ENCODE measurements at regions of chr12 and their contacts with region 1.

Region 1: DNA sequence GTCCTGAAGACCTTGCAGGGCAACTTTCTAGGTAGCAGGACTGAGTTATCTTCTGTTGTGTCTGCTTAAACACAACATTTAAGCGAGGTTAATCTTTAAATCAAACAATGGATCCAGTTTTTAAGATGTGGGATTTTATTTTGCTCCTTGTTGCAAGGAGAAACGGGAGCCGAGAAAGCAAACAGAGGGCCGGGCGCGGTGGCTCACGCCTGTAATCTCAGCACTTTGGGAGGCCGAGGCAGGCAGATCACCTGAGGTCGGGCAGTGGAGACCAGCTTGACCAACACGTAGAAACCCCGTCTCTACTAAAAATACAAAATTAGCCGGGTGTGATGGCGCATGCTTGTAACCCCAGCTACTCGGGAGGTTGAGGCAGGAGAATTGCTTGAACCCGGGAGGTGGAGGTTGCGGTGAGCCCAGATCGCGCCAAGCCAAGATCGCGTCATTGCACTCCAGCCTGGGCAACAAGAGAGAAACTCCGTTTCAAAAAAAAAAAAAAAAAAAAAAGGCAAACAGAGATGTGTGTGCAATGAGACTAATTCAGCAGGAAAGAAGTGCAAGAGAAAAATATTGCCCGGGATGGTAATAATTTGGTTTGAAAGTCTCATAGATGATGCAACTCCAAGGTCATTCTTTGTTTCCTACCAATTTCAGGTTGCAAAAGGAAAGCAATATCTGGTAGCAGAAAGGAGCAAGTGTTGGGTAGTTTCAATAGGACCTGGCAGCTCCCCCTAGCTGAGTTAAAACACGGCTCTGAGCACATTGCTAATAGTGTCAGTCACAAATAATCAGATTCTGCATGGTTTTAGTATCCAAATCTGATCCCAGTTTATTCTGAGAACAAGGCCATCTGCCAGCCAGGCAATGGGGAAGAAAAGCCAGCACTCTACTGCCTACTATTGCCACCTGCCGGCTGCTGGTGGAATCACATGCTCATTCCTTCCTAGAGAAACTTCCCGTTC is 141.4 kb downstream of the PPM1H start:
- DNase-seq: peak; percentile 87
- H3K4me3 ChIP-seq: no peak overlapping the region
- H3K27ac ChIP-seq: no peak overlapping the region
- H3K4me1 ChIP-seq: no peaks in the 10 kb centered on the region
- H3K27me3 ChIP-seq: no peaks in the 10 kb centered on the region
- CTCF ChIP-seq: peak; percentile 97

Region 2: GRCh38 chr12:62466594-62467491 is 326.7 kb before region 1 on chr12 and contains the start of gene MON2:
- intact Hi-C with region 1: no loop called
- DNase-seq: peak; percentile 91
- H3K4me3 ChIP-seq: peak within 1 kb of the TSS; percentile 98
- H3K27ac ChIP-seq: peak within 1 kb of the TSS; percentile 89
- H3K4me1 ChIP-seq: peaks cover 13% of the 10 kb centered on the region
- H3K27me3 ChIP-seq: no peaks in the 10 kb centered on the region
- CTCF ChIP-seq: no peak
- total RNA-seq, gene MON2: 50.4 to 53.0 TPM

Region 3: DNA sequence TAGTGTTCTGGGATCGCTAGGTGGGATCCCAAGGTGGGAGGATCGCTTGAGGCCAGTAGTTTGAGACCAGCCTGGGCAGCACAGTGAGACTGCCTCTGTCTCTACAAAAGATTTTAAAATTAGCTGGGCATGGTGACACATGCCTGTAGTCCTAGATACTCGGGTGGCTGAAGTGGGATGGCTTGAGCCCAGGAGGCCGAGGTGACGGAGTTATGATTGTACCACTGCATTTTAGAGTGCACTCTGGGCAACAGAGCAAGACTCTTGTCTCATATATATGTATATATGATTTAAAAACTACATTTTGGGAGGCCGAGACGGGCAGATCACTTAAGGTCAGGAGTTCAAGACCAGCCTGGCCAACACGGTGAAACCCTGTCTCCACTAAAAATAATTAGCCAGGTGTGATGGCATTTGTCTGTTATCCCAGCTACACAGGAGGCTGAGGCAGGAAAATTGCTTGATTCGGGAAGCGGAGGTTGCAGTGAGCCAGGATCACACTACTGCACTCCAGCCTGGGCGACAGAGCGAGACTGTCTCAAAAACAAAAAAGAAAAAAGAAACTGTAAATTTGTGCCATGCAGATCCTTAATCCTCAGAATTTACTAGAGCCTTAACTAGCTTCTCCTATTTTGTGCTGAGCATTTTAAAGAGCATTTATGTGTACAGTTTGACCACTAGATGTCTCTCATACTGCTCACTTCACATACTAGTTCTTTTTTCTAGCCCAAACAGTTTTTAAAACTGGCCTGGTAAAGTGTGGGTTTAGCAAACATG is 212.1 kb before region 1 on chr12:
- intact Hi-C with region 1: loop called (anchors 2 kb)
- DNase-seq: no peak
- H3K4me3 ChIP-seq: no peak overlapping the region
- H3K27ac ChIP-seq: no peak overlapping the region
- H3K4me1 ChIP-seq: no peaks in the 10 kb centered on the region
- H3K27me3 ChIP-seq: no peaks in the 10 kb centered on the region
- CTCF ChIP-seq: peak; percentile 50

Region 4: GRCh38 chr12:62603061-62603810 is 190.3 kb before region 1 on chr12:
- intact Hi-C with region 1: loop called (anchors 5 kb)
- DNase-seq: peak; percentile 81
- H3K4me3 ChIP-seq: peak overlapping the region; percentile 69
- H3K27ac ChIP-seq: peak overlapping the region; percentile 99
- H3K4me1 ChIP-seq: no peaks in the 10 kb centered on the region
- H3K27me3 ChIP-seq: no peaks in the 10 kb centered on the region
- CTCF ChIP-seq: peak; percentile 28

Region 5: GRCh38 chr12:62673028-62673815 is 120.3 kb before region 1 on chr12:
- intact Hi-C with region 1: no loop called
- DNase-seq: no peak
- H3K4me3 ChIP-seq: no peak overlapping the region
- H3K27ac ChIP-seq: no peak overlapping the region
- H3K4me1 ChIP-seq: no peaks in the 10 kb centered on the region
- H3K27me3 ChIP-seq: no peaks in the 10 kb centered on the region
- CTCF ChIP-seq: no peak

Region 6: DNA sequence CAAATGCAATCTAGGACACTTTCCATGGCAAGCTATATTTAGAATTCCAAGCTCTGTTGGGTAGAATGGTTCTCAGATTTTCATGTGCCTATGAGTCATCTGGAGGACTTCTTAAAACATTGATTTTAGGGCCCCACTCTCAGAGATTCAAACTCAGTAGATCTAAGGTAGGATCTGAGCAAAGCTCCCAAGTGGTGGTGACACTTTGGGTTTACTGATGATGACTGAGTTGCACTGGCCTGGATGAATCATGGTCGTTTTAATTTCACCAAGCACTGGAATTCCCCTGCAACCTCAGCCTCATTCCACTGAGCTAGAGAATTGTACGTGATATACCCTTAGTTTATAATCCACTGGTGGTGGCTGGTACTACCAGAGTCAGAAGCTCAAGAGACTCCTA is 54.9 kb after region 1 on chr12:
- intact Hi-C with region 1: no loop called
- DNase-seq: no peak
- H3K4me3 ChIP-seq: no peak overlapping the region
- H3K27ac ChIP-seq: no peak overlapping the region
- H3K4me1 ChIP-seq: no peaks in the 10 kb centered on the region
- H3K27me3 ChIP-seq: no peaks in the 10 kb centered on the region
- CTCF ChIP-seq: no peak

Region 7: DNA sequence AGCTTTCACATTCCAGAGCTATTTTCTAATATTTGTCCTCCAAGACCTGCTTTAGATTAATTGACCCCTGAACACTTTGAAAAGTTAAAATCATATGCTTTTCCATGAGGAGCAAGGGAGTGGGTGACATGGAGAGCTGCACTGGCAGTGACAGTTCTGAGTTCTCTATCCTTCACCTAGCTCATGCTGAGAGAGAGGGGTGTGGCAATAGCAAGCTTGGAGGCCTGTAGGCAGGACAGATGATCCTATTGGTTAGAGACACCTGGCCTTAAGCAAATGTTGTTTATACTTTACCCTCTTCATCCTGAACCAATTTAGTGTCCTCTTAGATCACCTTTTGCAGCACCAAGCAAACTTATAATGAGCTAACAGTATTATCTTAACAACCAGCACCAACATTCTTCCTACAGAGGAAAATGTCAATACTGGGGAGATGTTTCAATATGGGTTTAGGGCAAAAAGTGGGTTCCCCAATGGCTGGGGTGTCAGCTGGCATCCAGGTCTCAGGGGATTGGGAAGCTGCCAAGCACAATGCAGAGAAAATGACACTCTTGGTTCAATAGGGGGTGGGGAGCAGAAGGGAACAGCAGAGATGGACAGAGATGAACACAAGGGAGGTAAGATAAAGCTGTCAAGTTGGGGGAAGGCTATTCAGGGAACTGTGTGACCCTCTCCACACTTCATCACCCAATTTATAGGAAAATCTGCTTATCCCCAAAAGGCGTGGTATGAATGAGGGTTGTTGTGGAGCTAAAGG is 178.4 kb after region 1 on chr12:
- intact Hi-C with region 1: no loop called
- DNase-seq: no peak
- H3K4me3 ChIP-seq: no peak overlapping the region
- H3K27ac ChIP-seq: no peak overlapping the region
- H3K4me1 ChIP-seq: no peaks in the 10 kb centered on the region
- H3K27me3 ChIP-seq: no peaks in the 10 kb centered on the region
- CTCF ChIP-seq: no peak

Measured in colonic mucosa (tissue), 4 donors.